Right ventricle myocardium inferior (tissue), 1 donor: ENCODE measurements at regions of chr16 and their contacts with region 1.

Region 1: GRCh38 chr16:4271176-4272066 is 1.4 kb downstream of the TFAP4 start:
- DNase-seq: peak; percentile 98
- ATAC-seq: peak; percentile 87

Region 2: DNA sequence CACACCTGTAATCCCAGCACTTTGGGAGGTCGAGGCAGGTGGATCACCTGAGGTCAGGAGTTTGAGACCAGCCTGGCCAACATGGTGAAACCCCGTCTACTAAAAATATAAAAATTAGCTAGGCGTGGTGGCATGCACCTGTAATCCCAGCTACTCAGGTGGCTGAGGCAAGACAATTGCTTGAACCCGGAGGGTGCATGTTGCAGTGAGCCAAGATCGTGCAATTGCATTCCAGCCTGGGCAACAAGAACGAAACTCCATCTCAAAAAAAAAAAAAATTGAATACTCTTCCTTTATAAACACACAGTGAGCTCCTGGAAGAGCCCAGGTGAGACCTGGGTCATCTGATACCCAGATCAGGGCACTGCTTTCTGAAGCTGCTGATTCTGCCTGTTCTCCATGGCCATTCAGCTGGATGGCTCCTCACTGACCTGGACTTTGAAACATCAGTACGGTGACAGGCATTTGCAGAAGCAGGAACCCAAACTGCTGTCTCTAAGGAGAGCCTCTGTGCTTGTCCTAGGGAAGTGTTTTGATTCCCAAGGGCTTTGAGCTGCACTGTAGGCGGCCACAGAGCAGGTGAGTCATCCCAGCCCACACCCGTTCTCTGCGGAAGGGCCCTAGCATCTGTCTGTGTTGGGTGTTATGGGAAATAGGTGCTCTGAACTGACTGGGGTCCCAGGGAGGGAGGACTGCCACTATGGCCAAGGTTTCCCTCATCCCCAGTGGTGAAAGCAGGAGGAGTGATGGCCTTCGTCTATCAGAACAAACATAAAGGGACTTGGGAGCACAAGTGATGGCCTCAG is 94.6 kb before region 1 on chr16:
- intact Hi-C with region 1: no loop called
- DNase-seq: no peak
- ATAC-seq: no peak

Region 3: DNA sequence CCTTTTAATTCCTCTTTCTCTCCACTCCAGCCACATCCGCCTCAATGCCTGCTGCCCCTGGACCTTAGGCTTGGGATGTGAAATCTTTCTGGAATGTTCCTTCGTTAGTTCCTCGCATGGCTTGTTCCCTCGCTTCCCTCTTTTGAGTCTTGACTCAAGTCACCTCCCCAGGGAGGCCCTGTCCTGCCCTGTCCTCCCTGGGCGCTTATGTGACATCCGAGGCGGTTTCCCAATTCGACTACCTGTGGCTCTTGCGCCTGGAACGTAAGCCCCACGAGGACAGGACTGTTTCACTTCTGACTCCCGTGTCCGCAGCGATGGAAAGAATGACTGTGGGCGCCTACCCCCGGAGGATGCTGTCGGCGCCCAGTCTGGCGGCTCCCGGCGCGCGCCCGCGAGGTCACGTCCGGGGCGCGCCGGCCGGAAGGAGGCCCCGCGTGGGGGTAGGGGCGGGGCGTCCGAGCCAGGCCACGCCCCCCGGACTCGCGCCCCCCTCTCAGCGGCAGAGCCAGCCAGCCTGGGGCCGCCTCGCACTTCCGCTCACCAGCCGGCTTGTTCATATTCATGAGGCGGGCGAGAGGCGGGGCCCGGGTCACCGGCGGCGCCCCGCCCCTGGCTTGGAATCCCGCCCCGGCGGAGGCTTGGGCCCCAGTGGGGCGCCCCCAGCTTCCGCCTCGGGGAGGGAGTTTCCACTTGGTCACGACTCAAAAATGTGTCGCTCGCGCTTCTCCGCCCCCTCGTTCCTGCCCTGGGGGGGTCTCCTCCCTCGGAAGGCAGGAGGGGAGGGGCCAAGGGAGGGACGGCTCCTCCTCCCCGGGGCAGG is 36.0 kb after region 1 on chr16:
- intact Hi-C with region 1: loop called (anchors 2 kb)
- DNase-seq: peak; percentile 98
- ATAC-seq: peak; percentile 97